ENCODE measurements at regions of chr17 and their contacts with region 1.

Region 1: GRCh38 chr17:35063514-35064223 is at the start of gene RFFL:
- DNase-seq: peak; percentile 98
- ATAC-seq: peak; percentile 93
- H3K4me3 ChIP-seq: peak within 1 kb of the TSS; percentile 29; the same call in 1 of the 2 replicates
- H3K27ac ChIP-seq: peak within 1 kb of the TSS; percentile 86
- H3K4me1 ChIP-seq: peaks cover 23% of the 10 kb centered on the region
- H3K27me3 ChIP-seq: no peaks in the 10 kb centered on the region
- CTCF ChIP-seq: peak; percentile 16 to 48 (median 36); a peak in 3 of 6 replicates
- EP300 ChIP-seq: peak; percentile 80 to 86
- POLR2A ChIP-seq: peak; percentile 54
- RAD21 ChIP-seq: peak; percentile 45
- polyA plus RNA-seq, gene RFFL: 4.7 to 6.7 TPM

Region 2: GRCh38 chr17:34998205-34998604 is 65.5 kb before region 1 on chr17:
- CTCF ChIA-PET with region 1: interaction called, 13 read pairs
- POLR2A ChIA-PET with region 1: no interaction called
- RAD21 ChIA-PET with region 1: interaction called, 4 read pairs
- SMC1A ChIA-PET with region 1: interaction called, 13 read pairs
- in situ Hi-C with region 1: no loop called
- intact Hi-C with region 1: loop called (anchors 1 kb)
- DNase-seq: peak; percentile 40
- ATAC-seq: peak; percentile 97
- H3K4me3 ChIP-seq: no peak overlapping the region
- H3K27ac ChIP-seq: no peak overlapping the region
- H3K4me1 ChIP-seq: no peaks in the 10 kb centered on the region; the same call in 1 of the 2 replicates
- H3K27me3 ChIP-seq: no peaks in the 10 kb centered on the region
- CTCF ChIP-seq: peak; percentile 94 to 97 (median 97); a peak in 5 of 6 replicates
- EP300 ChIP-seq: no peak
- POLR2A ChIP-seq: no peak
- RAD21 ChIP-seq: peak; percentile 99

Region 3: GRCh38 chr17:35028531-35029262 is 35.0 kb before region 1 on chr17:
- CTCF ChIA-PET with region 1: interaction called, 10 read pairs
- POLR2A ChIA-PET with region 1: interaction called, 5 read pairs
- RAD21 ChIA-PET with region 1: interaction called, 18 read pairs
- SMC1A ChIA-PET with region 1: interaction called, 10 read pairs
- in situ Hi-C with region 1: no loop called
- intact Hi-C with region 1: loop called (anchors 1 kb)
- DNase-seq: no peak
- ATAC-seq: peak; percentile 73
- H3K4me3 ChIP-seq: no peak overlapping the region
- H3K27ac ChIP-seq: peak overlapping the region; percentile 61; the same call in 1 of the 2 replicates
- H3K4me1 ChIP-seq: peaks cover 15% of the 10 kb centered on the region
- H3K27me3 ChIP-seq: no peaks in the 10 kb centered on the region
- CTCF ChIP-seq: no peak
- EP300 ChIP-seq: no peak
- POLR2A ChIP-seq: no peak
- RAD21 ChIP-seq: no peak

Region 4: DNA sequence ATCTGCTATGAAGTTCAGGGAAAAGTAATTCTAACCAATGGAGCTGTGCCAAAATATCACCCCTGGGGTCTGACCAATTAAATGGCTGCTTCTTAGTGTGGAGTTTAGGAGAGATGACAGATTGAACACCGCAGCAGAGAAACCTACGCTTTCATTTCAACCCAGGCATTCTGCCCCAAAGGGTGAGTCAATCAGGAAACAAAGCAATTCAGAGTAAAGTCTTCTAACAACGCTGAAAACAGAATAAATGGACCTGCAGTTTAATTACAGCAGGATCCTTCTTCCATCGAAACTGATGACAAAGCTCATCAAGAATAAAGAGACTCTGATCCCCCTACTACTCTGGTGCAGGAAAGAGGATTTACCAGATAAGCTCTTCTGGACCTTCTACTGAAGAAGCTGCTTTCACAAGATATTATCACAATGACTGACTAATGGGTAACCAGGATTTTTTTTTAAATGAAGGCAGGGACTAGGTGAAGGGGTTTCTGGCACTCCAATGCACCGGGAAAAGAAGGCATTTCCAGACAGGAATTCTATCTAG is 16.9 kb before region 1 on chr17:
- CTCF ChIA-PET with region 1: interaction called, 23 read pairs
- POLR2A ChIA-PET with region 1: interaction called, 37 read pairs
- RAD21 ChIA-PET with region 1: interaction called, 73 read pairs
- SMC1A ChIA-PET with region 1: interaction called, 221 read pairs
- in situ Hi-C with region 1: no loop called
- intact Hi-C with region 1: loop called (anchors 1 kb)
- DNase-seq: peak; percentile 81
- ATAC-seq: peak; percentile 87
- H3K4me3 ChIP-seq: peak overlapping the region; percentile 57
- H3K27ac ChIP-seq: peak overlapping the region; percentile 75
- H3K4me1 ChIP-seq: peaks cover 42% of the 10 kb centered on the region
- H3K27me3 ChIP-seq: no peaks in the 10 kb centered on the region
- CTCF ChIP-seq: no peak
- EP300 ChIP-seq: peak in 1 of 2 experiments; percentile 42; a peak in 1 of 4 replicates
- POLR2A ChIP-seq: peak; percentile 50
- RAD21 ChIP-seq: no peak

Region 5: GRCh38 chr17:35082073-35082657 is 18.5 kb after region 1 on chr17:
- CTCF ChIA-PET with region 1: interaction called, 23 read pairs
- POLR2A ChIA-PET with region 1: interaction called, 115 read pairs
- RAD21 ChIA-PET with region 1: interaction called, 452 read pairs
- SMC1A ChIA-PET with region 1: interaction called, 534 read pairs
- in situ Hi-C with region 1: no loop called
- intact Hi-C with region 1: no loop called
- DNase-seq: no peak
- ATAC-seq: peak; percentile 59
- H3K4me3 ChIP-seq: peak overlapping the region; percentile 28; the same call in 1 of the 2 replicates
- H3K27ac ChIP-seq: peak overlapping the region; percentile 83
- H3K4me1 ChIP-seq: peaks cover 37% of the 10 kb centered on the region
- H3K27me3 ChIP-seq: no peaks in the 10 kb centered on the region
- CTCF ChIP-seq: no peak
- EP300 ChIP-seq: no peak
- POLR2A ChIP-seq: no peak
- RAD21 ChIP-seq: no peak

Measured in GM12878 (cell line).